ENCODE measurements at regions of chr19 and their contacts with region 1.

Region 1: DNA sequence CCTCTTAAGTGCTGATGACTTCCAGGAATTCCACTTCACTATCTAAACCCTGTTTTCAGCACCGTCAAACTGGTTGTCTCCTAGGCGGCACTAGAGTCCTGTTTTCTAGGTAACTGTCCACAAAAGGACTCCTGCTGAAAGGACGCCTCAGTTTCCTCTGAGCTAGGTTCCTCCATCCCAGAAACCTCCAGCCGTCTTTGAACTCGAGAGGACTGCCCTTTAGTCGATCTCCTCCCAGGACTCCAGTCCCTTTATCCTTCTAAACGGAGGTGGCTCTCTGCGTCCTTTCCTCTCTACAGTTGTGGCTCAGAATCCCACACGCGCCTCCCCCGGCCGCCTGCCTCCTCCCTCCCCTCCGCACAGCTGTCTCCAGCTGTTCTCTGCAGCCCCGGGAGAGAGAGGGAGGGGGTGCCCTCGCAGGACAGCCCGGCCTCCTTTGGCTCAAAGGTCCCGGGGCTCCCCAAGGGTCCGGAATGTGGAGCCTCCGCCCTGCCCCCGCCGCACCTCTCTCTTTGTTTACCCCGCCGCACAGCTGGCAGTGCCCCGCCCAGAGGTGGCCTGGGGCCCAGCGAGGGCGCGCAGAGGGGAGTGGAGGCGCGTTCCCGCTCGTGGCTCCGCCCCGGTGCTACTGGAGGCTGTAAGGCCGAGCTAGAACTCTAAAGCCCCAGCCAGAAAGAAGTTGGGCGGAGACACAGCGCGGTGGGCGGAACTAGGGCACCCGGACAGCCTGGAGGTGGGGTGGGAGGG is 2.4 kb downstream of the LTBP4 start:
- DNase-seq: peak; percentile 100
- H3K4me3 Mint-ChIP-seq: peak overlapping the region; percentile 85
- H3K27ac Mint-ChIP-seq: peak overlapping the region; percentile 90
- H3K4me1 Mint-ChIP-seq: peaks cover 90% of the 10 kb centered on the region
- H3K27me3 Mint-ChIP-seq: peaks cover 56% of the 10 kb centered on the region

Region 2: GRCh38 chr19:40542202-40542859 is 61.2 kb before region 1 on chr19:
- CTCF ChIA-PET with region 1: interaction called, 13 read pairs
- DNase-seq: no peak
- H3K4me3 Mint-ChIP-seq: no peak overlapping the region
- H3K27ac Mint-ChIP-seq: no peak overlapping the region
- H3K4me1 Mint-ChIP-seq: no peaks in the 10 kb centered on the region
- H3K27me3 Mint-ChIP-seq: peaks cover 40% of the 10 kb centered on the region

Region 3: DNA sequence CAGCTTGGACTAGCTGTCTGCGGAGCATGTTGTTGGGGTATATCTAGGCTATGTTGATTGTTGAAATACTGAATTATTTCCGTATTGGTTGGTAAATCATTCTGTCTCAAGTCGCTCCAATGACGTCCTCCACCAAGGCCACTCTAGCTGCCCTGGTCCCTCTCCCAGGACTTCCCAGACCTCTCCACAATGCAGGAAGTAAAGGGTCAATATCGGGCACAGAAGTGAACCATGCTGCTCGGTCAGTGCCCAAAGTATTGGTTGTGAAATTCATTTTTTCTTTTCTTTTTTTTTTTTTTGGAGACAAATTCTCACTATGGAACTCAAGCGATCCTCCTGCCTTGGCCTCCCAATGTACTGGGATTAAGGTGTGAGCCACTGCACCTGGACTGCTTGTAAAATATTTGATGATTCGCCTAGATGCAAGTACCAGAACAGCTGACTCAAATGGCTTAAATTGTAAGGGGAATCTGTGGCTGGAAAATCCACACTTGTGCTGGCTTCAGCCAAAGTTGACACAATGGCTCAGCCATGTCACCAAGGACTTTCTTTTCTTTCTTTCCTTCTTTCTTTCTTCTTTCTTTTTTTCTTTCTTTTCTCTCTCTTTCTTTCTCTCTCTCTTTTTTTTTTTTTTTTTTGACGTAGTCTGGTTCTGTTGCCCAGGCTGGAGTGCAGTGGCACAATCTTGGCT is 43.1 kb after region 1 on chr19:
- CTCF ChIA-PET with region 1: no interaction called
- DNase-seq: no peak
- H3K4me3 Mint-ChIP-seq: no peak overlapping the region
- H3K27ac Mint-ChIP-seq: no peak overlapping the region
- H3K4me1 Mint-ChIP-seq: peaks cover 5% of the 10 kb centered on the region
- H3K27me3 Mint-ChIP-seq: peaks cover 26% of the 10 kb centered on the region

Region 4: GRCh38 chr19:40718774-40719391 is 115.3 kb after region 1 on chr19:
- CTCF ChIA-PET with region 1: no interaction called
- DNase-seq: no peak
- H3K4me3 Mint-ChIP-seq: peak overlapping the region; percentile 89
- H3K27ac Mint-ChIP-seq: no peak overlapping the region
- H3K4me1 Mint-ChIP-seq: peaks cover 77% of the 10 kb centered on the region
- H3K27me3 Mint-ChIP-seq: no peaks in the 10 kb centered on the region

Region 5: DNA sequence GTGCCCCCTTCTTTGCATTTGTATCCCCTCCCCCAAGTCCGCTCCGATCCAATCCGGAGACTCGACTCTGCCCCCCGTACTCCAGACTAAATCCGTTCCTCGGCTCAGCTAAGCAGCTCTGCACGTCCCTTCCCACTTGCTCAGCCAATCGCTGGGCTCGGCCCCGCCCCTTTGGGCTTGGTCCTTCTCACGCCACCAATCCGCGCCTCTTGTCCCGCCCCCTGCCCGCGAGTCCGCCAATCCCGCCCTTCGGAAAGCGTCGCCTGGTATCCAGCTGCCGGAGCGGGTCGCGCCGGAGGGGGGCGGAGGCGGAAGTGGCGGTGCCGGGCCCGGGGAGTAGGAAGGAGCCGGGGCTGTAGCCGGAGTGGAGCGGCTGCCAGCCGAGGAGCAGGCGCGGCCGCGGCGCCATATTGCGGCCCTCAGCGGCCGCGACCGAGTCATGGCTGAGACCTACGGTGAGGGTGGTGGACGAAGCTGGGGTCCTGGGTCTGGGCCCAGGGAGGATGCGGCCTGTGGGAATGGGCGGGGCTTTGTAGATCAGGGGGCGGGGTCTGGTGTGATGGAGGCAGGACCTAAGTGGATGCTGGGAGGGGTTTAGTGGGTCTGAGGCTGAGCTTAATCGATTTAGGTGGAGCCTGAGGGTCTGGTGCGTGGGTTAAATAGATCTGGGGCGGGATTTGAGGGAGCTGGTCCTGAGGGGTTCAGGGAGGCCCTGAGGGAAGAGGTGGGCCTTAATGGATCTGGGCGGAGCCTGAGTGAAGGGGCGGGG is 174.6 kb after region 1 on chr19 and contains the start of gene RAB4B:
- CTCF ChIA-PET with region 1: no interaction called
- DNase-seq: peak; percentile 100
- H3K4me3 Mint-ChIP-seq: peak within 1 kb of the TSS; percentile 99
- H3K27ac Mint-ChIP-seq: peak within 1 kb of the TSS; percentile 100
- H3K4me1 Mint-ChIP-seq: peaks cover 35% of the 10 kb centered on the region
- H3K27me3 Mint-ChIP-seq: no peaks in the 10 kb centered on the region